ENCODE measurements at regions of chr3 and their contacts with region 1.

Region 1: GRCh38 chr3:62332835-62333244 is 40.5 kb downstream of the FEZF2 start:
- DNase-seq: peak; percentile 65
- H3K4me3 ChIP-seq: no peak overlapping the region
- H3K27ac ChIP-seq: no peak overlapping the region
- H3K4me1 ChIP-seq: no peaks in the 10 kb centered on the region
- H3K27me3 ChIP-seq: no peaks in the 10 kb centered on the region

Region 2: GRCh38 chr3:62119151-62119550 is 213.7 kb before region 1 on chr3:
- in situ Hi-C with region 1: no loop called
- DNase-seq: no peak
- H3K4me3 ChIP-seq: no peak overlapping the region
- H3K27ac ChIP-seq: no peak overlapping the region
- H3K4me1 ChIP-seq: no peaks in the 10 kb centered on the region
- H3K27me3 ChIP-seq: no peaks in the 10 kb centered on the region

Region 3: DNA sequence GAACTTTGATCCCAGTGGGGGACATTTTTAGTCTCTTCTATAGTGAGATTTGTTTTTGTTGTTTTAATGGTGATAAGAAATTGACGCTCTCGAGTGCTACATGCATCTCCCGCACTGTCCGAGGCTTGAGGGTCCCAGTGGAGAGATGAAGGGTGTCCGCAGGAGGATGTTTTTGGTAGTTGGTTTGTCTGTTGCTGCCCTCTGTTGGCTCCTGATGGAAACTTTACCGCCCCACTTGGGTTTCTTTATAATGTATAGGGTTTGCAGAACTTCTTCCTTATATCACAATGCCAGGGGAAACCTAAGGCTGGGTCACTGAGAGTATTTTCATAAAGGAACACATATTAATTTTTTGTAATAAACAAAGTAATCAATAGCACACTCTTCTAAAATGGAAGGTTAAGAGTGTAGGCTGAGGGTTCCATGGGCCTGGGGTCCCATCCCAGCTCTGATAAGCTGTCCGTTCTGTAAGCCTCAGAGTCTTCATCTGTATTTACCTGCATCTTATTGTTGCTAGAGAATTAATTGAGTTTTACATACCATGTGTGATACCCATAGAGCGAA is 225.8 kb after region 1 on chr3:
- in situ Hi-C with region 1: loop called (anchors 10 kb)
- DNase-seq: no peak
- H3K4me3 ChIP-seq: no peak overlapping the region
- H3K27ac ChIP-seq: no peak overlapping the region
- H3K4me1 ChIP-seq: peaks cover 22% of the 10 kb centered on the region
- H3K27me3 ChIP-seq: no peaks in the 10 kb centered on the region